OCI-LY7 (cell line): ENCODE measurements at regions of chr2 and their contacts with region 1.

Region 1: GRCh38 chr2:48727565-48727964 is 28.0 kb downstream of the LHCGR start:
- DNase-seq: peak; percentile 2
- H3K4me3 ChIP-seq: no peak overlapping the region
- H3K27ac ChIP-seq: no peak overlapping the region
- H3K4me1 ChIP-seq: no peaks in the 10 kb centered on the region
- CTCF ChIP-seq: 0 out of 2 replicates have a peak, but pooled peaks have one; percentile 33

Region 2: DNA sequence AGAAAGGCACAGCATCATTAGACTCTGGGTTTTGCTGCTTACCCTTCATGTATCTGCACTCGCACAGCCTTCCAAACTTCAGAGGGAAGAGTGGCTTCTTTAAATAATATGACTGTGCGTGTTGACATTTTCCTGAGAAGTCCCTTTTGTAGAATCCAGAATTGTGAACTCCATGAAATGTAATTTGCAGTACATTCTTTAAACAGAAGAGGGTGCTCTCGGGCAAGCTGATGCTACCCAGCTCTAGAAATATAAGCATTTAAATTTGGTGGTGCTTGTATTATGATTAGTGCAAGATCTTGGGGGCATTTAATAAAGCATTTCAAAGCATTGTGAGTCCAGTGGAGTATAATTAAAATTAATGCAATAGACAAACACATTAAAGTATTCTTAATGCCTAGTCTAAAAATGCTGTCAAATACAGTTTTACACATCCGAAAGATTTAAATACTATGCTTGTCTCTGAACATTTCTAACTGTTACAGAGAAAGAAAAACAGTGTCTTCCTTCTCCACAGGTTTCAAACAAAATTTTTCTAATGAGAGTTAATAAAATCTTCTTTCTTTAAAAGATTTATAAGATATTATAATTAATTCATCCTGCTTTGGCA is 127.3 kb before region 1 on chr2:
- CTCF ChIA-PET with region 1: no interaction called
- POLR2A ChIA-PET with region 1: interaction called, 3 read pairs
- intact Hi-C with region 1: loop called (anchors 5 kb)
- DNase-seq: peak; percentile 40
- H3K4me3 ChIP-seq: no peak overlapping the region
- H3K27ac ChIP-seq: no peak overlapping the region
- H3K4me1 ChIP-seq: no peaks in the 10 kb centered on the region
- CTCF ChIP-seq: peak; percentile 91

Region 3: DNA sequence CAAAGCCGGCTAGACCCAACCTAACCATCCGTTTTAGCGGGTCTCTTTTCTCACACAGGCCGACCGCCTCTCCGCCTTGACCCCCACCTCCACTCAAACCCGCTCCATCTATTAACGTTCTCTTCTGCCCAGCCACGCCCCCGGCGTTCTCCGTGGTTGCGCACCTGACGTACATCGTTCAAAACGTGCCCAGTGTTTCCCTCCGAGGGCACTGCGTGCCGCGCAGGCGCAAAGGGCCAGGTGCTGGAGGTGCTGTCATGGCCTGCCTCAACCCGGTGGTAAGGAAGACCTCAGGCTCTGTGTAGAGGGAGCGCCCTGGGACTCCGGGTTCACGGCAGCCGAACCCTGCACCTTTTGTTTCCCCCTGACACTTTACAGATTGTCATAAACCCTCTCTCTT is 109.9 kb before region 1 on chr2 and contains the start of gene GTF2A1L:
- CTCF ChIA-PET with region 1: no interaction called
- POLR2A ChIA-PET with region 1: no interaction called
- intact Hi-C with region 1: no loop called
- DNase-seq: no peak
- H3K4me3 ChIP-seq: no peak within 1 kb of the TSS
- H3K27ac ChIP-seq: no peak within 1 kb of the TSS
- H3K4me1 ChIP-seq: no peaks in the 10 kb centered on the region
- CTCF ChIP-seq: no peak
- total RNA-seq, gene GTF2A1L: not detected in 2 replicates

Region 4: DNA sequence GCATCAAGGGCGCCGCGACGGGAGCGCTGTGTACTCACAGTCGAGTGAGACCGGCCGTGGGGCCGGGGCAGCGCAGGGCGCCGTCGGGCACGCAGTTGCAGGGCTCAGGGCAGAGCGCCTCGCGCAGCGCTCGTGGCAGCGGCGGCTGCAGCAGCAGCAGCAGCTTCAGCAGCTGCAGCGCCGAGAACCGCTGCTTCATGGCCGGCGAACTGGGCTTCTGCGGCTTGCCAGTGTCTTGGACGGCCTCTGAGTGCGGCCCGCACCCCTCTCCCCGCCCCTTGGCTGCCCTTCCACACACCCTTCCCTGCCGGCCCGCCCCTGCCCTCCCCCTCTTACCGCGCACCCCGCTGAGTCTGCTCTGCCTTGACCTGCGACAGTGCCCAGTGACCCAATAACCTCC is 27.9 kb after region 1 on chr2 and contains the start of gene LHCGR:
- CTCF ChIA-PET with region 1: no interaction called
- POLR2A ChIA-PET with region 1: no interaction called
- intact Hi-C with region 1: no loop called
- DNase-seq: no peak
- H3K4me3 ChIP-seq: no peak within 1 kb of the TSS
- H3K27ac ChIP-seq: no peak within 1 kb of the TSS
- H3K4me1 ChIP-seq: peaks cover 13% of the 10 kb centered on the region
- CTCF ChIP-seq: no peak
- total RNA-seq, gene LHCGR: not detected in 2 replicates